Ascending aorta (tissue), 2 donors: ENCODE measurements at regions of chr19 and their contacts with region 1.

Region 1: GRCh38 chr19:6103217-6103644 is 7.1 kb downstream of the RFX2 start:
- DNase-seq: peak; percentile 66 to 98
- H3K4me3 ChIP-seq: no peak overlapping the region
- H3K27ac ChIP-seq: peak overlapping the region; percentile 83 to 90
- H3K4me1 ChIP-seq: peaks cover 13 to 54% of the 10 kb centered on the region in 2 donors
- H3K27me3 ChIP-seq: no peaks in the 10 kb centered on the region
- CTCF ChIP-seq: no peak

Region 2: DNA sequence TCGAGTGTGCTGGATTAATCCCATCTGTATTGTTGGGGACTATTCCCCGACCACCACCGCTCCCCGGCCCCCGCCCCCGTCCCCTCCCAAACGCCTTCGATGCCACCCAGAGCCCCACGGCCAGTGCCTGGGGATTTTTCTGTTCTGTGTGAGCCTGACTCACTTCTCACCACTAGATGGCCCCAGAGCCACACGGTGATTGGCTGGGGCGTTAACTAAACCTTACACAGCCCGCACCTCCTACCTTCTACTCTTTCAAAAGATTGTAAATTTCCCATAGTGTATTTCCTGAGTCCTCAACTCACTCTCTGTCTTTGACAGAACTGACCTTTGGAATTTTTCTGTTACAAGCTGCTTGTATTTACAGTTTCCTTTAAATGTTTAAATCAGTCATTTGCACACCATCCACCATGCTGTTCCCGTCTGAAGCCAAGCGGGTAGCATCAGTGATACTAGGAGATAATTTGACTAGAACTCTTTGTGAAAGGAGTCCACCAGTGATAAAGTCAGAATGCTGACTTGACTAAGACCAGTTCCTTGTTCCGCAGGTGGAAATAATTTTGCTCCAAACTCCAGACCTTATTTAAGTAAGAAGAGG is 54.3 kb before region 1 on chr19:
- intact Hi-C with region 1: no loop called
- DNase-seq: peak in 1 of 2 donors; percentile 89
- H3K4me3 ChIP-seq: peak overlapping the region in 1 of 2 donors; percentile 10
- H3K27ac ChIP-seq: no peak overlapping the region
- H3K4me1 ChIP-seq: peaks cover 0 to 11% of the 10 kb centered on the region in 2 donors
- H3K27me3 ChIP-seq: no peaks in the 10 kb centered on the region
- CTCF ChIP-seq: peak; percentile 87 to 92 (median 88)

Region 3: GRCh38 chr19:6066661-6067646 is 36.3 kb before region 1 on chr19:
- intact Hi-C with region 1: loop called (anchors 1 kb)
- DNase-seq: peak; percentile 71 to 98
- H3K4me3 ChIP-seq: peak overlapping the region in 1 of 2 donors; percentile 5
- H3K27ac ChIP-seq: peak overlapping the region; percentile 76 to 85
- H3K4me1 ChIP-seq: peaks cover 17 to 75% of the 10 kb centered on the region in 2 donors
- H3K27me3 ChIP-seq: no peaks in the 10 kb centered on the region
- CTCF ChIP-seq: no peak

Region 4: GRCh38 chr19:6092329-6093286 is 10.6 kb before region 1 on chr19:
- intact Hi-C with region 1: loop called (anchors 1 kb)
- DNase-seq: peak; percentile 75 to 95
- H3K4me3 ChIP-seq: peak overlapping the region; percentile 6 to 59
- H3K27ac ChIP-seq: peak overlapping the region; percentile 88 to 92
- H3K4me1 ChIP-seq: peaks cover 18 to 35% of the 10 kb centered on the region in 2 donors
- H3K27me3 ChIP-seq: no peaks in the 10 kb centered on the region
- CTCF ChIP-seq: peak in 1 of 3 experiments; percentile 10

Region 5: DNA sequence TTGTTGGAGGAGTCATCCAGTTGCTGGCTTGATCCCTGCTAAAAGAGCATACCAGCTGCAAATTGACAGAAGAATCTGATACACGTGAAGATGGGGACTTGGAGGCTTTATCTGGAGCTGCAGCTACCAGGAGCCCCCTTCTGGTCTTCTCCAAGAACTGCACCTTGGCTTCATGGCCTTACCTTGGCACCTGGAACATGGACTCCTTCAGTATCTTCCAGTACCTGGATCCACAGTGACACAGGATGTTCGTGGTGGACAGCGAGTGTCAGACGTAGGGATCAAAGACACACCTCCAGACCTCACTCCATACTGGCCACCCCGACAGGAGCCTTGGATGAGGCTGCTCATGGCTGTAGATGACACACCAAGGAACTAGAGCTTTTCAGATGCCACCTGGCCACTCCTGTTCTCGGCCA is 22.3 kb after region 1 on chr19:
- intact Hi-C with region 1: no loop called
- DNase-seq: peak in 1 of 2 donors; percentile 80
- H3K4me3 ChIP-seq: no peak overlapping the region
- H3K27ac ChIP-seq: no peak overlapping the region
- H3K4me1 ChIP-seq: no peaks in the 10 kb centered on the region
- H3K27me3 ChIP-seq: no peaks in the 10 kb centered on the region
- CTCF ChIP-seq: peak; percentile 90 to 98 (median 95)

Region 6: GRCh38 chr19:6273701-6274601 is 170.7 kb after region 1 on chr19:
- intact Hi-C with region 1: loop called (anchors 5 kb)
- DNase-seq: peak; percentile 79 to 98
- H3K4me3 ChIP-seq: peak overlapping the region; percentile 31 to 45
- H3K27ac ChIP-seq: peak overlapping the region; percentile 90 to 92
- H3K4me1 ChIP-seq: peaks cover 30 to 69% of the 10 kb centered on the region in 2 donors
- H3K27me3 ChIP-seq: no peaks in the 10 kb centered on the region
- CTCF ChIP-seq: no peak